Activated CD4-positive, alpha-beta memory T cell treated with anti-CD3 and anti-CD28 coated beads, Interleukin-2, amount 10 ng/mL, durations not matched to agents 7 days and 5 days (primary cell): ENCODE measurements at regions of chr5 and their contacts with region 1.

Region 1: DNA sequence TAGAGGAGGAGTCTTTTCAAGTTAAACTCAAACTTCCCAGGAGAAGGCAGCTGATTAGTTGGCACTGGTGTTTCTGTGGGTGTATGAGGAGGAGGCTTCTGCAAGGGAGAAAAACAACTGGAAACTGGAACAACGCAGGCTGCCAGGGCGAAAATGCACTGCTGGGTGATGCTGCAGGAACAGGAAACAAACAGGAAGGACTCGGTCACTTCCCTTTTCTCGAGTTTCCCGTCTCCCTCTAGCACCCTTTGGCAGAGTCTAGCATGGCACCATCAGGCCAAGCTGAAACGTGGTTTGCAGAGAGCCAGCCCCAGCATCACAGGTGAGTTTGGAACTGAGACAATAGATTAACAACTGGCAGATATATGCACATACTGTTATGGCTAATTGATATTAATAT is 77.5 kb upstream of the CAST start:
- DNase-seq: no peak
- H3K4me3 Mint-ChIP-seq: no peak overlapping the region
- H3K27ac Mint-ChIP-seq: no peak overlapping the region
- H3K4me1 Mint-ChIP-seq: peaks cover 8% of the 10 kb centered on the region
- H3K27me3 Mint-ChIP-seq: peaks cover 27% of the 10 kb centered on the region

Region 2: GRCh38 chr5:96595300-96596090 is 10.8 kb after region 1 on chr5:
- CTCF ChIA-PET with region 1: interaction called, 29 read pairs
- POLR2A ChIA-PET with region 1: no interaction called
- DNase-seq: no peak
- H3K4me3 Mint-ChIP-seq: no peak overlapping the region
- H3K27ac Mint-ChIP-seq: no peak overlapping the region
- H3K4me1 Mint-ChIP-seq: peaks cover 1% of the 10 kb centered on the region
- H3K27me3 Mint-ChIP-seq: peaks cover 24% of the 10 kb centered on the region

Region 3: DNA sequence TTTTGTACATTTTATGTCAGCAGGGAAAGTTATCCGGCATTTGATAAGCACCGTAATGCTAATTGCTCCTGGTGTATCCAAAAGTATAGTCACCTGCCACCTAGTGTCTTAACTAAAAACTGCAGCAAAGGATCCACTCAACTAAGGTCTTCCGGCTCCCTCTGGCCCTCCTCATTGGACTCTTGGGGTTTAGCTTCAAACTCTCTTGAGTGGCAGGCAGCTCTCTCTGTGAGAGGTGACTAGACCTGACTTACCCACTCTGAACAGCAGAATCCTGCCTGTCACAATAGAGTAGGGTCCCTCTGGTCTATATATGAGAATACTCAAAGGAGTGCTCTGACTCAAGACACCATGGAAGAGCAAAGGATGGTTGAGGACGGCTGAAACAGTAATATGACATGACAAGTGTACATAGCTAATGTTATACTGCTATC is 17.1 kb after region 1 on chr5:
- CTCF ChIA-PET with region 1: interaction called, 29 read pairs
- POLR2A ChIA-PET with region 1: no interaction called
- DNase-seq: peak; percentile 45
- H3K4me3 Mint-ChIP-seq: no peak overlapping the region
- H3K27ac Mint-ChIP-seq: no peak overlapping the region
- H3K4me1 Mint-ChIP-seq: peaks cover 1% of the 10 kb centered on the region
- H3K27me3 Mint-ChIP-seq: peaks cover 18% of the 10 kb centered on the region